GM10248 (cell line): ENCODE measurements at regions of chr10 and their contacts with region 1.

Region 1: GRCh38 chr10:95693668-95694534 is at the start of gene TCTN3:
- DNase-seq: peak; percentile 99
- CTCF ChIP-seq: peak; percentile 98

Region 2: DNA sequence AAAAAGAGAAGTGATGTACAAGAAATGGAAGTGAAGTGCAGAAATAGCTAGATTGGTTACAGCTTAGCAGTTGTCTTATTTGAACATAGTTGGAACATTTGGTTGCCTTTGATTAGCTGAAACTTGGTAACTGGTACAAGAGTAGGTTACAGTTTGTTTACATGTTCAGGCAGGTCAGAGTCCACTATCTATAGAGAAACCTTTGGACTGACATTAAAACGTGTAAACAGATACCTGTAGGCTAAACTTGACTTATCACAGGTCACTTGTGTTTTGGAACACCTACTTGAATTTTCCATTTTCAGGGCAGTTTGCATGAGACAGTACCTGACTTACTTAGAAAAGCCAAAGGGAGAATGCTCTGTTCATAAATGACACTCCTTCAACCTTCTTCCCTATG is 596.1 kb before region 1 on chr10:
- CTCF ChIA-PET with region 1: no interaction called
- POLR2A ChIA-PET with region 1: no interaction called
- DNase-seq: no peak
- CTCF ChIP-seq: no peak

Region 3: DNA sequence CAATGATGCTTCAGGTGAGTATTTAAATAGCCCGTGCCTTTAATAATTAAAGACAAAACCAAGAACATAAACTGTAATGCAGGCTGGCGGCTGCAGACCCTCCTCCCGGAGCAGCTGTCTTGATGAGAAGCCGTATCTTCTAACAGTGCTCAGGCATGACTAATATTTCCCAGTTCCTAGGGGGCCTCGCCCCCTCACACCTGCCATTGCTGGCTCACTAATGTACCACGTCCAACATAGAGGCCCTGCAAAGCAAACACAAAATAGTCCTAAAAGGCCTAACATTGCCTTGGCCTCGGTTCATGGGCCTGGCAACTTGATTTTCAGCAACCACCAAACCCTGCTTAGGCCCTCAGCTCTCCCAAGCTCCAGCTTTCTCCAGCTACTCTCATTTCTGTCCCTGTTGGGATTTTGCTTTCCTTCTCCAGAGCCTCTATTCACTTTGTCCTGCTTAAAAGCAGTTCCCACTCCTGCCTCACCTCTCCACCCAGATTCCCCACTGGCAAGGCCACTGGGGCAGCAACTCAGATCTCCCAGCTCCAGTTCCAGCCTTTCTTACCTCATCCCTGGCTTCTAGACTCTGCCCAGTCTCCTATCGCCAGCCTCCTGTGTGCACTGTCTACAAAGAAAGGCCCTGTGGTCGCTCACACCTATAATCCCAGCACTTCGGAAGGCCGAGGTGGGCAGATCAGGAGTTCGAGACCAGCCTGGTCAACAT is 149.0 kb before region 1 on chr10:
- CTCF ChIA-PET with region 1: no interaction called
- POLR2A ChIA-PET with region 1: no interaction called
- DNase-seq: no peak
- CTCF ChIP-seq: no peak

Region 4: GRCh38 chr10:95706986-95707385 is 13.1 kb after region 1 on chr10:
- CTCF ChIA-PET with region 1: interaction called, 36 read pairs
- POLR2A ChIA-PET with region 1: no interaction called
- DNase-seq: no peak
- CTCF ChIP-seq: no peak

Region 5: DNA sequence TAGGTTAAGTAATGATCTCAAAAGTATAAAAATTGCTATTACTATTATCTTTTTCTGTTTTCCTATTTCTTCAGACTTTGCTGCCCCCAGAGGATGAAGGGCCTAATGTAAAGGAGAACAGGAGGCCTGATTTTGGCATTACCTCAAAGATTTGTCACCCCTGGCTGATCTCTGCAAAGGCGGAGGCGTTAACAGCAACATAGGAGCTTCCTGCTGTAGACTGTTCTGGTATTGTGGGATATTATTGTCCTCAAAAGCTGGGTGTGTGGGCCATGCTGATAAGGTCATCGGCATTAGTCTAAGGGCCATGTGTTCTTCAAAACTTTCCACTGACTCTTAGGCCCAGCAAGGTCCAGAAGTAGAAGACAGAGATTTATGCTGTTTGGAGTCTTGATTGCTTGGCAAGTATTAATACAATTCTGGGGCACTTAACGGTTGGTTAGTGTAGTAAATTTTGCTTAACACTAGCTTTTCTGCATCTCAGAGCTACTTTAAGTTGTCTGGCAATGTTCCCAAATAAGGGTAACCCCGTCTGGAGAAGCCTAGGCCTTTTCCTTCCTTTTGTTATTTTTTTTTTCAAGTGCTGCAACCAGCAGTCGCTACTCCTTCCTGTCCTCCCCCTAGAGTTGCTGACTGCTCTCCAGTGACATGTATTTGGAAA is 48.0 kb after region 1 on chr10:
- CTCF ChIA-PET with region 1: interaction called, 56 read pairs
- POLR2A ChIA-PET with region 1: no interaction called
- DNase-seq: peak; percentile 45
- CTCF ChIP-seq: peak; percentile 37

Region 6: DNA sequence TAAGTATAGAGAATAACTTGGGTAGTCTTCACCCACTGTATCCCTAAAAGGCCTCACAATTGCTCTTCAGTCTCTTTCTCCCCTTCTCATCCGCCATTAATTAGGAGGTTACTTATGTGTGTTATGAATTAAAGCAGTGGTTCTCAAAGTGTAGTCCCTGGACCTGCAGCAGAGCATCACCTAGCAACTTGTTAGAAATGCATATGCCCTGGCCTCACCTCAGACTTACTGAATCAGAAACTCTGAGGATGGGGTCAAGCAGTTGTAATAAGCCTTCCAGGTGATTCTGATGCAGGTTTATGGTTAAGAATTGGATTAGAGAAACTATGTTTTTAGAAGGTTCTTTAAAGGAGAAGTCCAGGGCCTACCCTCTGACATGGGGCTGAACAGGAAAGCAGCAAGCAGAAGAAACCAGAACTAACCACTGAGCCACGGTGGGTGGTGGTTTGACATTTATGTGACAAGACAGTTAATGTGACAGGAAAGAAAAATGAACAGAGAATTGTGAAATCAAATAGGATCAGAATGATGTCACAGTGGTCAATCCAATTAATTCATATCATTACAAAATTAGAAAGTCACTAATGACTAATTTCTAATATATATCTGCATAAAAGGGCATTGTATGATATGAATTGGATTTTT is 99.6 kb after region 1 on chr10:
- CTCF ChIA-PET with region 1: interaction called, 36 read pairs
- POLR2A ChIA-PET with region 1: no interaction called
- DNase-seq: no peak
- CTCF ChIP-seq: no peak

Region 7: GRCh38 chr10:95841661-95842498 is 148.0 kb after region 1 on chr10:
- CTCF ChIA-PET with region 1: interaction called, 305 read pairs
- POLR2A ChIA-PET with region 1: interaction called, 6 read pairs
- DNase-seq: peak; percentile 38
- CTCF ChIP-seq: peak; percentile 68

Region 8: GRCh38 chr10:95873651-95874050 is 179.8 kb after region 1 on chr10:
- CTCF ChIA-PET with region 1: interaction called, 40 read pairs
- POLR2A ChIA-PET with region 1: no interaction called
- DNase-seq: no peak
- CTCF ChIP-seq: no peak

Region 9: DNA sequence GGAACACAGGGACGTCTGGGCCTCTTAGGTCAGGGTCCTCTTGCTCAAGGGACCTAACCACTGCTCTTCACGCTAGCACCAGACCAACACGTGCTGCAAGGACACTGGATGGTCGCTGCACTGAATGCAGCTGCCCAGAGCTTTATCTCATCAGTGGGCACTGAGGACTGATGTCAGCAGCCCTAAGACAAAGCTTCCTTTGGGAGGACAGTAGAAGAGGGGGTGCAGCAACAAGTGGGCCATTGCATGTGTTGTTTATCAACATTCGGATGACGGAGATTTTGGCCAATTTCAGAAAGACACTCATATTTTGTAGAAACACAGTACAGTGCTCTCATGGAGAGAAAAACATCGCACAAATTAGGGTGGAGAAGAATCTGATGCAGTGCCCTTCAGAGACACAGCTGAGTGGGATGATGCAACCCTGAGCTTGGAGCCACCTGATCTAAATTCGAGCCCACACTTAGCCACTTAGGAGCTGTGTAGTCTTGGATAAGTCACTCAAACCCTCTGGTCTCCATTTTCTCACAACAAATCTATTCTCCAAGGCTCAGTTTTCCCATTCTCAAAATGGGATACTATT is 663.2 kb after region 1 on chr10:
- CTCF ChIA-PET with region 1: no interaction called
- POLR2A ChIA-PET with region 1: no interaction called
- DNase-seq: no peak
- CTCF ChIP-seq: no peak